AG04449 (cell line): ENCODE measurements at regions of chr5 and their contacts with region 1.

Region 1: GRCh38 chr5:170183816-170184687 is 48.7 kb upstream of the C5orf58 start:
- DNase-seq: no peak
- H3K4me3 ChIP-seq: no peak overlapping the region
- CTCF ChIP-seq: peak; percentile 87

Region 2: DNA sequence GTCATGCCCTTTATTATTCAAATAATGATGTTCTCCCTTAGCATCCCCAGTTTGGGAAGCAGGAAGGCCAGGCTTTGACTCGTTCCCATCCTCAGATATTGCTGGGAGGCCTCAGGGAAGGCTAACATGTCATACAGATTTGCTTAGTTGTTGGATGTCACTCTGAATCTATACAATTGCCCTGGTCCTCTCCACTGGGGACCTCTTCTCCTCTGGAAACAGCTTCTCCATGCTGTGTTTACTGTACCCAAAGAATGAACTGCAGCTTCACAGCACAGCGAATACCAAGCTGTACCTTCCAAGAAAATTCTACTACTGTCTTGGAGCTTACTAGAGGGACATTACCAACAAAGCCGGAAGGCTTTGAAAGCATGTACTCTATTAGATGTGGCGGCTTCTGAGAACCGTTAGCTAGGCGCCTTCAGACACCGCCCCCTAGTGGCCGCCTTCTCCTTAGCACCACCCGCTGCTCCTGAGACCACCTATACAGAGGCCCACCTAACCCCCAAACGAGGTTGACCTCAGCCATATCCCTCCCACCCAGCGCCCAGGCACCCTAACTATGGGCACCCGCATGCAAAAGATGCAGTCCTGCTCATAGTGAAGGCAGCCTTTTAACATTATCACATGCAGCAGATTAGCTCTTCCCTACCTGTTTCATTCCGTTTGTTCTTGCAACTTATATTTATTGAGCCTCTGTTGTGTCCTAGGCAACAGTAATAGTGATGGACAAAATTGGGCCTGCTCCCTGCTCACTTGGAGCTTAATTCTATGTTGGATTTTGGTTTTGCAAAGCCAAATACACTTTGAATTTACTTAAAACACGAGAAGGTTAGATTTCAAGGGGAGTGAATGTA is 113.3 kb before region 1 on chr5:
- CTCF ChIA-PET with region 1: interaction called, 14 read pairs
- POLR2A ChIA-PET with region 1: no interaction called
- DNase-seq: no peak
- H3K4me3 ChIP-seq: no peak overlapping the region
- CTCF ChIP-seq: peak; percentile 79

Region 3: DNA sequence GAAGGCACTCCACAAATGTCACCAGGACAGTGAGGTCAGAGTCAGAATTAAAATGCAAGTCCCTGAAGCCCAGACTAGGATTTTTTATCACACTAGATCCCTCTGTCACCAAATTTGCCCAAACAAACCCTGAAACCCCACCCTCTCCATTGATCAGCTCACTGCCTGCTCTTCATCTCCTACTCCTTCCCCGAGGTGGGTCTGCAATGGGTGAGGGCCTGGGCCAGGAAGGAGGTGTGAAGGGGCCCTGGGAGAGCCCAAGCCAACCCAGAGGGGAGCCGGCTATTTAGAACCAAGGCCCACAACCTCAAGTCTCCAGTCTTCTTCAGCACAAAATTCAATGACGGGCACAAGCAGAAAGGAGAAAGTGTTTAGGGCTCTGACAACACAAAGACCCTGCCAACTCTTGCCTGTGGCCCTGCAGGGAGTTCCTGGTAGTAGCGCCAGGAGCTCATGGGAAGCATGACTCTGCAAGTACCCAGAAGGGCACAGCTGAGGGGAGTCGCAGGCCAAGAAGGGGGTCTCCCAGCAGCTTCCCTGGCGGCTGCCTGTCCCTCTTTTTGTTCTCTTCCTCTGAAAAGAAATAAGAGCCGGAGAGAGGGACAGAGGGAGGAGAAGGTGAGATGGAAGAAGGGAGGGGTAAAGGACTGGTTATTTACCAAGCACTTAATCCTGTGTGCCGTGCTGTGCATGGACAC is 72.8 kb before region 1 on chr5:
- CTCF ChIA-PET with region 1: interaction called, 14 read pairs
- POLR2A ChIA-PET with region 1: no interaction called
- DNase-seq: no peak
- H3K4me3 ChIP-seq: no peak overlapping the region
- CTCF ChIP-seq: no peak

Region 4: DNA sequence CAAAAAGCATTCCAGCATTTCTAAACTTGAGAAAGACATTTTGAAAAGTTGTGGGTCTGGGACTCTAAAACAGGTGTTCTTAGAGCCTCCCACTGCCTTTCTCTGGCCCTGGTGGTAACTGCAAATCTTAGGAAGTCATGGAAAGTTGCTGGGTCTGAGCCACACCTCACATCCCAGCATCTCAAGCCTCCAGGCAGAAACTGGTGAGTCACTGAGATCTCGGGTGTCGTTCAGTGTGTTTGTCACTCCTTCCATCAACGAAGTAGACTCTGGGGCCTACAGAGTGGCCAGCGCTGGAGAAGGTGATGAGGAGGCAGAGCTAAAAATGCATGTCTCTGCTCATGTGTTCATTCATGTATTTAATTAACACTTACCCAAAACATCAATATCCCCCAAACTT is 10.8 kb before region 1 on chr5:
- CTCF ChIA-PET with region 1: interaction called, 65 read pairs
- POLR2A ChIA-PET with region 1: no interaction called
- DNase-seq: no peak
- H3K4me3 ChIP-seq: no peak overlapping the region
- CTCF ChIP-seq: no peak

Region 5: DNA sequence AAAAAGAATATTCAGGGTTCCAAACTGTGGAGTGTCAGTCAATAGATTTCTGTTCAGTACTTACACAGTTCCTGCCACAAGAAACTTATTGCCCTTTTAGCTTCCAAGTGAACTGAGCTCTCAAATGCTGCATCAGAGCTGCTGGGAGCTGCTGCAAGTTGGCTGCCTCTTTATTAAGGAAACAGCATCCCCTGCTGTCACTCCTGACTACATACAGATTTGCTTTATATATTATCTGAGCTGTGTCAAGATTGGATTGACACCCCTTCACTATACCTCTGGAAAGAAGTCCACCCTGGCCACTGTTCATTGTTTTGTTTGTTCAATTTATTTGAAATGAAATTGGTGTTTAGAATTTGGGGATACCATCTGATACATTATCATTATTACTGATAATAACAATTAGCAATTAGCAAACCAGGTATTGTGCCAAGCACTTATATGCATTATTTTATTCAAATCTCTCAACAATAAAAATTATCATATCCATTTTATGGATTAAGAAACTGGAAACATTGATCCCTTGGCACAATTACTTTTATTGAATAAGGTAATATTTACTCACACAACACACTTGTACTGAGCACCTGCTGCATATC is 32.3 kb after region 1 on chr5:
- CTCF ChIA-PET with region 1: interaction called, 42 read pairs
- POLR2A ChIA-PET with region 1: no interaction called
- DNase-seq: peak; percentile 24
- H3K4me3 ChIP-seq: no peak overlapping the region
- CTCF ChIP-seq: peak; percentile 59